ENCODE measurements at regions of chr15 and their contacts with region 1.

Region 1: GRCh38 chr15:77543159-77543882 is 89.4 kb downstream of the LINGO1 start:
- DNase-seq: peak; percentile 72 to 93
- H3K4me3 ChIP-seq: peak overlapping the region in 1 of 4 experiments; percentile 15; a peak in 1 of 8 replicates
- H3K27ac ChIP-seq: no peak overlapping the region
- H3K4me1 ChIP-seq: peaks cover 2 to 15% (median 6%) of the 10 kb centered on the region in 4 experiments
- H3K27me3 ChIP-seq: no peaks in the 10 kb centered on the region
- CTCF ChIP-seq: peak; percentile 64 to 96 (median 95)
- EP300 ChIP-seq: no peak
- POLR2A ChIP-seq: no peak
- RAD21 ChIP-seq: peak; percentile 99

Region 2: GRCh38 chr15:77094397-77095030 is 448.8 kb before region 1 on chr15:
- CTCF ChIA-PET with region 1: interaction called, 16 read pairs
- POLR2A ChIA-PET with region 1: no interaction called
- DNase-seq: peak in 1 of 2 experiments; percentile 74
- H3K4me3 ChIP-seq: no peak overlapping the region
- H3K27ac ChIP-seq: no peak overlapping the region
- H3K4me1 ChIP-seq: no peaks in the 10 kb centered on the region
- H3K27me3 ChIP-seq: no peaks in the 10 kb centered on the region
- CTCF ChIP-seq: peak; percentile 79 to 82 (median 80)
- EP300 ChIP-seq: no peak
- POLR2A ChIP-seq: no peak
- RAD21 ChIP-seq: peak; percentile 62 to 69

Region 3: GRCh38 chr15:77118882-77119321 is 424.4 kb before region 1 on chr15:
- CTCF ChIA-PET with region 1: interaction called, 75 read pairs
- POLR2A ChIA-PET with region 1: no interaction called
- DNase-seq: no peak
- H3K4me3 ChIP-seq: no peak overlapping the region
- H3K27ac ChIP-seq: no peak overlapping the region
- H3K4me1 ChIP-seq: peaks cover 0 to 4% (median 0%) of the 10 kb centered on the region in 4 experiments; a peak in 4 of 7 replicates
- H3K27me3 ChIP-seq: no peaks in the 10 kb centered on the region
- CTCF ChIP-seq: peak in 2 of 3 experiments; percentile 60 to 66; a peak in 2 of 4 replicates
- EP300 ChIP-seq: no peak
- POLR2A ChIP-seq: no peak
- RAD21 ChIP-seq: peak; percentile 81 to 85

Region 4: DNA sequence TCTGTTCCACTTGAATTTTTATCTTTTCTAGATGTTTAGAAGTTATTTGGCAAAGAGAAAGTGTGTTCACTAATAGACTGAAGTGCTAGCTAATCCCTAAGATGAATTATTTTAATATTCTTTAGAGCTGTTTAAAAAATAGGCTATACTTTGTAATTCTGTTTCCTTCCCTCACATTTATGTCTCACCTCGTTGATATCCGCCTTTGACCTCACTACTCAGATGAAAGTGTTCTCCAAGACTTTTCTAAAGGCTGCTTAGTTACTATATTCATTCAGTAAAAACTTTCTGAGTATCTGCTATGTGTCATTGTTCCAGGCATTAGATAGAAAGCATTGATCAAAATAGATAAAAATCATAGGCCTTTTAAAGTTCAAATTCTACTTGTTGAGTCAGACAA is 84.3 kb before region 1 on chr15:
- CTCF ChIA-PET with region 1: no interaction called
- POLR2A ChIA-PET with region 1: no interaction called
- DNase-seq: no peak
- H3K4me3 ChIP-seq: no peak overlapping the region
- H3K27ac ChIP-seq: no peak overlapping the region
- H3K4me1 ChIP-seq: peaks cover 0 to 4% (median 0%) of the 10 kb centered on the region in 4 experiments; a peak in 1 of 7 replicates
- H3K27me3 ChIP-seq: no peaks in the 10 kb centered on the region
- CTCF ChIP-seq: no peak
- EP300 ChIP-seq: no peak
- POLR2A ChIP-seq: no peak
- RAD21 ChIP-seq: no peak

Region 5: DNA sequence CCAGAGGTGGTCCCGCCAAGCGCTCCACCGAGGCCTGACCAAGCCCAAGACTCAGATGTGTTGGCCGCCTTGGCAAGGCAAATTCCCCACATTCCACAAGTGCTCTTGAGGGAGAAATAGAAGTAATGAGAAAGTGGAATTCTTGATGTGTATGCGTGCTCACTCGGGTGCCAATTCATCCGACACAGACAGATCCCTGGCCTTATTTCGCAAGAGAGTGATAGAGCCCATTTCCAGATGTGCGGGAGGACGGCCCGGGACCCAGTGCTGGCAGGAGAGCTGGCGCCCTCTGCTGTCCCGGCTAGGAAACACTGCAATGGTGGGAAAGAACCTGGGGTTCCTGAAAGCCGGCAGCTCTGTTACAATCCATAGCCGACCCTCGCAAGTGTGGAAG is 46.6 kb before region 1 on chr15:
- CTCF ChIA-PET with region 1: interaction called, 99 read pairs
- POLR2A ChIA-PET with region 1: no interaction called
- DNase-seq: peak; percentile 73 to 95
- H3K4me3 ChIP-seq: peak overlapping the region in 1 of 4 experiments; percentile 15; a peak in 1 of 8 replicates
- H3K27ac ChIP-seq: 0 out of 2 replicates have a peak overlapping the region, but pooled peaks have one; percentile 28
- H3K4me1 ChIP-seq: peaks cover 13 to 38% (median 19%) of the 10 kb centered on the region in 4 experiments
- H3K27me3 ChIP-seq: no peaks in the 10 kb centered on the region
- CTCF ChIP-seq: peak; percentile 89 to 96 (median 90)
- EP300 ChIP-seq: no peak
- POLR2A ChIP-seq: no peak
- RAD21 ChIP-seq: peak; percentile 94

Region 6: GRCh38 chr15:77526791-77527778 is 16.2 kb before region 1 on chr15:
- CTCF ChIA-PET with region 1: interaction called, 49 read pairs
- POLR2A ChIA-PET with region 1: interaction called, 9 read pairs
- DNase-seq: no peak
- H3K4me3 ChIP-seq: no peak overlapping the region; a peak in 1 of 8 replicates
- H3K27ac ChIP-seq: no peak overlapping the region
- H3K4me1 ChIP-seq: peaks cover 0 to 28% (median 6%) of the 10 kb centered on the region in 4 experiments; a peak in 6 of 7 replicates
- H3K27me3 ChIP-seq: no peaks in the 10 kb centered on the region; a peak in 1 of 7 replicates
- CTCF ChIP-seq: no peak
- EP300 ChIP-seq: no peak
- POLR2A ChIP-seq: no peak
- RAD21 ChIP-seq: no peak

Region 7: DNA sequence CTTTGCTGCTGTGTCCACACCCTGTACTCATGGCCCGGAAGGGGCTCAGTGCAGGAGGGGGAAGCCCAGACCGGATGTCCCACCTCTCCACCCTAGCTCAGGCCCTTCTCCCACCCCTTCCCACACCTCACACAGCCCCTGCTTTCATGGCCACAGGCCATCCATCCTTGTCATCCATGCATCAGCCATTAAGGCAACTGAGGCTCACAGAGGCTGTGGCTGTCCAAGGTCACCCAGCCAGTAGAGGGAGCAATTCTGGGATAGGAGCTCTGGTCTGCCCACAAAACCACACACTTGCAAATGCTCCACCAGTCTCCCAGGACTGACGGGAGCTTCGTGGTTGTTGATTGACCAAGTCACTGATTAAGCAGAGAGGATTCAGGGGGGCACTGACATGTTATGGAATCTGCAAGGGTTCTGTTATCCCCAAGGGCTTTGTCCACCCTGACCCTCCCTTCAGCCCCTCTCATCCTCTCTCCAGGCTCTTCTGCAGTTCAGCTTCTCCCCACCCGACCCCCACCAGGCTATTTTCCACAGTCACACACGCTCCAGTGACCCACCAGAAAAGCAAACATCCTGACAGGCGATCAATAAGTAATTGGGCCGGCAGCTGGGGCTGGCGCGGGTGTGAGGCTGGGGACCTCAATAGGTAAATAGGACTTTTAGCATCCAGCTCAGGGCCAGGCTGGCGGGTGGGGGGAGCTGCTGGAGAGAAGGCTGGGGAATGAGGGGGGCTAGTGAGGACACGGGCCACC is 74.3 kb after region 1 on chr15:
- CTCF ChIA-PET with region 1: interaction called, 40 read pairs
- POLR2A ChIA-PET with region 1: no interaction called
- DNase-seq: no peak
- H3K4me3 ChIP-seq: no peak overlapping the region
- H3K27ac ChIP-seq: no peak overlapping the region
- H3K4me1 ChIP-seq: peaks cover 0 to 30% (median 18%) of the 10 kb centered on the region in 4 experiments; a peak in 6 of 7 replicates
- H3K27me3 ChIP-seq: no peaks in the 10 kb centered on the region
- CTCF ChIP-seq: peak in 2 of 3 experiments; percentile 71 to 84; a peak in 3 of 4 replicates
- EP300 ChIP-seq: no peak
- POLR2A ChIP-seq: no peak
- RAD21 ChIP-seq: peak; percentile 47 to 58; a peak in 3 of 4 replicates

Region 8: GRCh38 chr15:77798151-77798835 is 255.0 kb after region 1 on chr15:
- CTCF ChIA-PET with region 1: no interaction called
- POLR2A ChIA-PET with region 1: no interaction called
- DNase-seq: no peak
- H3K4me3 ChIP-seq: no peak overlapping the region
- H3K27ac ChIP-seq: no peak overlapping the region
- H3K4me1 ChIP-seq: 0 out of 7 replicates have a peak, but pooled peaks cover 0 to 3% (median 0%) of the 10 kb centered on the region in 4 experiments
- H3K27me3 ChIP-seq: no peaks in the 10 kb centered on the region
- CTCF ChIP-seq: no peak
- EP300 ChIP-seq: no peak
- POLR2A ChIP-seq: no peak
- RAD21 ChIP-seq: no peak